Natural killer cell (primary cell): ENCODE measurements at regions of chr18 and their contacts with region 1.

Region 1: GRCh38 chr18:79507076-79507545 is 111.4 kb downstream of the NFATC1 start:
- DNase-seq: peak in 1 of 2 donors; percentile 48
- ATAC-seq: peak; percentile 37 to 71 (median 52)
- H3K4me3 ChIP-seq: peak overlapping the region; percentile 12
- H3K4me3 Mint-ChIP-seq: peak overlapping the region; percentile 82
- H3K27ac ChIP-seq: peak overlapping the region; percentile 67
- H3K27ac Mint-ChIP-seq: peak overlapping the region; percentile 82 to 89
- H3K4me1 ChIP-seq: peaks cover 47% of the 10 kb centered on the region
- H3K4me1 Mint-ChIP-seq: peaks cover 43 to 54% of the 10 kb centered on the region in 2 donors
- H3K27me3 ChIP-seq: no peaks in the 10 kb centered on the region
- H3K27me3 Mint-ChIP-seq: peaks cover 0 to 5% of the 10 kb centered on the region in 2 donors
- CTCF ChIP-seq: no peak

Region 2: GRCh38 chr18:79523736-79524180 is 16.6 kb after region 1 on chr18:
- intact Hi-C with region 1: loop called (anchors 1 kb)
- DNase-seq: peak; percentile 39 to 92
- ATAC-seq: peak; percentile 47 to 75 (median 64)
- H3K4me3 ChIP-seq: peak overlapping the region; percentile 41
- H3K4me3 Mint-ChIP-seq: peak overlapping the region; percentile 92
- H3K27ac ChIP-seq: peak overlapping the region; percentile 88
- H3K27ac Mint-ChIP-seq: peak overlapping the region; percentile 90 to 91
- H3K4me1 ChIP-seq: peaks cover 50% of the 10 kb centered on the region
- H3K4me1 Mint-ChIP-seq: peaks cover 32 to 62% of the 10 kb centered on the region in 2 donors
- H3K27me3 ChIP-seq: no peaks in the 10 kb centered on the region
- H3K27me3 Mint-ChIP-seq: no peaks in the 10 kb centered on the region
- CTCF ChIP-seq: no peak

Region 3: DNA sequence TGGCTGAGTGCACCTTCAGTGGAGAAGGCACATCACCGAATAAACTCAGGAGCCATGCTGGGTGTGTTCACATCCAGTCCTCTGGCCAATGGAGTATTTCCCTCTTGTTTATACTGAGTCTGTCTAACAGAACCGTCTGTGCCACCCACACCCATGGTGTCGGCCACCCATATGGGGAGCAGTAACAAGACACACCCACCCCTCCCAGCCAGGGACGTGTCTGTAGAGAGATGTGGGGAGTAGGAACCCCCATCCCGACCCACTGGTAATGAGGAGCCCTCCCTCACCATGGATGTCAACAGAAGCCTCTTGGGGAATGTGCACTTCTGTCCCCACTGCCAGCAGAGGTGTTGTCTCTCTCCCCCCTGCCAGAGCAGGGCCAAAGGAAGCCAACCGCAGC is 327.7 kb after region 1 on chr18:
- intact Hi-C with region 1: no loop called
- DNase-seq: no peak
- ATAC-seq: peak in 1 of 3 donors; percentile 17
- H3K4me3 ChIP-seq: no peak overlapping the region
- H3K4me3 Mint-ChIP-seq: no peak overlapping the region
- H3K27ac ChIP-seq: no peak overlapping the region
- H3K27ac Mint-ChIP-seq: no peak overlapping the region
- H3K4me1 ChIP-seq: no peaks in the 10 kb centered on the region
- H3K4me1 Mint-ChIP-seq: no peaks in the 10 kb centered on the region
- H3K27me3 ChIP-seq: no peaks in the 10 kb centered on the region
- H3K27me3 Mint-ChIP-seq: peaks cover 9% of the 10 kb centered on the region in 2 donors
- CTCF ChIP-seq: no peak